HCT116 (cell line): ENCODE measurements at regions of chr1 and their contacts with region 1.

Region 1: GRCh38 chr1:206982216-206982615 is 12.0 kb upstream of the FCAMR start:
- DNase-seq: peak; percentile 27
- ATAC-seq: peak; percentile 95
- H3K4me3 ChIP-seq: no peak overlapping the region
- H3K27ac ChIP-seq: no peak overlapping the region
- H3K4me1 ChIP-seq: no peaks in the 10 kb centered on the region
- H3K27me3 ChIP-seq: no peaks in the 10 kb centered on the region
- CTCF ChIP-seq: peak; percentile 77 to 87 (median 87)
- POLR2A ChIP-seq: no peak
- RAD21 ChIP-seq: peak; percentile 89

Region 2: GRCh38 chr1:206612129-206612876 is 369.9 kb before region 1 on chr1 and contains the start of gene EIF2D:
- CTCF ChIA-PET with region 1: interaction called, 6 read pairs
- POLR2A ChIA-PET with region 1: no interaction called
- RAD21 ChIA-PET with region 1: no interaction called
- intact Hi-C with region 1: loop called (anchors 1 kb)
- DNase-seq: peak; percentile 79
- ATAC-seq: peak; percentile 94
- H3K4me3 ChIP-seq: peak within 1 kb of the TSS; percentile 95 to 96
- H3K27ac ChIP-seq: peak within 1 kb of the TSS; percentile 74
- H3K4me1 ChIP-seq: peaks cover 8 to 12% of the 10 kb centered on the region in 2 experiments; a peak in 2 of 4 replicates
- H3K27me3 ChIP-seq: no peaks in the 10 kb centered on the region
- CTCF ChIP-seq: peak; percentile 79 to 95 (median 79)
- POLR2A ChIP-seq: peak; percentile 86
- RAD21 ChIP-seq: no peak
- total RNA-seq, gene EIF2D: 54.8 TPM

Region 3: DNA sequence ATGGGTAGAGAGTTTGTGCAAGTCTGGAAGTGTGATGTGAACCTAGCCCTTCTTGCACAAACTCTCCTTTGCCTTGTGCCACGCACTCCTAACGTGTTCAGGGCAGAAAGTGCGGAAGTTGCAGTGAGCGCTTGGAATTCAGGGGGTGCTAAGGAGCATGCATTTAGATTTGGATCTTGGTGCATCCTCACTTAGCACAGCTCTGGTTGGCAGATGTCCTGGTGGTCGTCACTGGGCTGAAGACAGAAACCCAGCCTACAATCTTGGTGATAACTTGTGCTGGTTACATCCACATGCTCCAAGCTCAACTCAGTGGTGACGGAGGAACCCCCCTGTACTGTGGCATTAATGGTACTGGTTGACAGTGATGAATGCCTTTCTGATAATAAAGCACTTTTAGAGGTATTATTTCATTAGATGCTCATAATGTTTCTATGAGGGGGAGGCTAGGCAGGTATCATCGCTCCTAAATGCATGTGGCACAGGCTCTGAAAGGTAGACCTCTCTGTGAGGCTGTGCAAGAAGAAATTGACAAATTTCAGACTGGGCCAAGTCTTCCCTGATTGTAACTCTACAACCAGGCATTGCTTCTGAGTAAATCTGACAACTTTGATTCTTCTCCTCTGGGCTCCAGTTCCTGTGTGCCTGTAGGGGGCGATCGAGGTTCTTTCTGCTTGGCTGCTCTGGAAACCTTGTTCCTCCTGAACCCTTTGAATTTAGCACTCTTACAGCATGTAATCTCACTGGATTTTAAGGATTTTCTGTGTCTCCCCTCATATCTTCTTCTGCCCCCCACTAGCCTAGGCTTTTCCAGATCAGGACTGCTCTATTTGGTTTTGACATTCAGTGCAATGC is 256.9 kb before region 1 on chr1:
- CTCF ChIA-PET with region 1: interaction called, 11 read pairs
- POLR2A ChIA-PET with region 1: no interaction called
- RAD21 ChIA-PET with region 1: no interaction called
- intact Hi-C with region 1: loop called (anchors 1 kb)
- DNase-seq: peak; percentile 15
- ATAC-seq: peak; percentile 70
- H3K4me3 ChIP-seq: no peak overlapping the region
- H3K27ac ChIP-seq: no peak overlapping the region
- H3K4me1 ChIP-seq: peaks cover 0 to 16% of the 10 kb centered on the region in 2 experiments; a peak in 1 of 4 replicates
- H3K27me3 ChIP-seq: no peaks in the 10 kb centered on the region
- CTCF ChIP-seq: peak in 2 of 3 experiments; percentile 67 to 76; a peak in 5 of 6 replicates
- POLR2A ChIP-seq: no peak
- RAD21 ChIP-seq: no peak

Region 4: DNA sequence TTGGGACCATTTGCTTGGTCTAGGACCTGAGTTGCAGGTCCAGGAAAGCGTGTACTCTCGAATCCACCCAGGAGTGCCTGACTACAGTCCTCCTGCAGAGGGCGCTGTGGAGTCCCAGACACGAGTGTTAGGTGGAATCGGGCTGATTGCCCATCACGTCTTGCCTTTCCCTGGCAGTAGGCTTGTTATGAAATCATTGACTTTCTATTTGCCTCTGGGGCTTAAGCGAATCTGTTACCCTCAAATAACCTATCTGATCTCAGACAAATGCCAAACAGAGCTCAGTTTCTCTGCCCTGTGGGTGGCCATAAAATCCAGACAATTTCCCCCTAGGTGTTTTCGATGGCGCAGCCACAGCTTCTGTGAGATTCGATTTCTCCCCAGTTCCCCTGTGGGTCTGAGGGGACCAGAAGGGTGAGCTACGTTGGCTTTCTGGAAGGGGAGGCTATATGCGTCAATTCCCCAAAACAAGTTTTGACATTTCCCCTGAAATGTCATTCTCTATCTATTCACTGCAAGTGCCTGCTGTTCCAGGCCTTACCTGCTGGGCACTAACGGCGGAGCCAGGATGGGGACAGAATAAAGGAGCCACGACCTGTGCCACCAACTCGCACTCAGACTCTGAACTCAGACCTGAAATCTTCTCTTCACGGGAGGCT is 117.1 kb before region 1 on chr1 and contains the start of gene IL20:
- CTCF ChIA-PET with region 1: no interaction called
- POLR2A ChIA-PET with region 1: no interaction called
- RAD21 ChIA-PET with region 1: no interaction called
- intact Hi-C with region 1: loop called (anchors 5 kb)
- DNase-seq: peak; percentile 45
- ATAC-seq: peak; percentile 97
- H3K4me3 ChIP-seq: no peak within 1 kb of the TSS
- H3K27ac ChIP-seq: no peak within 1 kb of the TSS
- H3K4me1 ChIP-seq: peaks cover 0 to 7% of the 10 kb centered on the region in 2 experiments; a peak in 2 of 4 replicates
- H3K27me3 ChIP-seq: no peaks in the 10 kb centered on the region
- CTCF ChIP-seq: peak; percentile 78 to 98 (median 97)
- POLR2A ChIP-seq: no peak
- RAD21 ChIP-seq: peak; percentile 68
- total RNA-seq, gene IL20: not detected

Region 5: GRCh38 chr1:206992790-206993189 is 10.6 kb after region 1 on chr1:
- CTCF ChIA-PET with region 1: interaction called, 11 read pairs
- POLR2A ChIA-PET with region 1: no interaction called
- RAD21 ChIA-PET with region 1: no interaction called
- intact Hi-C with region 1: no loop called
- DNase-seq: no peak
- ATAC-seq: no peak
- H3K4me3 ChIP-seq: no peak overlapping the region
- H3K27ac ChIP-seq: no peak overlapping the region
- H3K4me1 ChIP-seq: no peaks in the 10 kb centered on the region
- H3K27me3 ChIP-seq: no peaks in the 10 kb centered on the region
- CTCF ChIP-seq: no peak
- POLR2A ChIP-seq: no peak
- RAD21 ChIP-seq: no peak

Region 6: GRCh38 chr1:207032528-207033017 is 50.4 kb after region 1 on chr1 and contains the start of gene C1orf116:
- CTCF ChIA-PET with region 1: no interaction called
- POLR2A ChIA-PET with region 1: no interaction called
- RAD21 ChIA-PET with region 1: no interaction called
- intact Hi-C with region 1: no loop called
- DNase-seq: peak; percentile 88
- ATAC-seq: peak; percentile 96
- H3K4me3 ChIP-seq: peak within 1 kb of the TSS; percentile 46 to 55
- H3K27ac ChIP-seq: no peak within 1 kb of the TSS
- H3K4me1 ChIP-seq: peaks cover 27 to 81% of the 10 kb centered on the region in 2 experiments
- H3K27me3 ChIP-seq: no peaks in the 10 kb centered on the region
- CTCF ChIP-seq: no peak
- POLR2A ChIP-seq: no peak
- RAD21 ChIP-seq: no peak
- total RNA-seq, gene C1orf116: 3.6 TPM